Adrenal gland (tissue), 19 donors: ENCODE measurements at regions of chr15 and their contacts with region 1.

Region 1: GRCh38 chr15:72796515-72797337 is 13.2 kb upstream of the ADPGK start:
- DNase-seq: peak in 6 of 7 donors; percentile 16 to 67 (median 52)
- H3K4me3 ChIP-seq: peak overlapping the region in 2 of 4 donors; percentile 31 to 70
- H3K27ac ChIP-seq: no peak overlapping the region
- H3K4me1 ChIP-seq: peaks cover 4 to 5% of the 10 kb centered on the region in 2 donors
- H3K27me3 ChIP-seq: no peaks in the 10 kb centered on the region
- CTCF ChIP-seq: peak in 3 of 6 experiments; percentile 57 to 64 (median 64)
- POLR2A ChIP-seq: no peak

Region 2: DNA sequence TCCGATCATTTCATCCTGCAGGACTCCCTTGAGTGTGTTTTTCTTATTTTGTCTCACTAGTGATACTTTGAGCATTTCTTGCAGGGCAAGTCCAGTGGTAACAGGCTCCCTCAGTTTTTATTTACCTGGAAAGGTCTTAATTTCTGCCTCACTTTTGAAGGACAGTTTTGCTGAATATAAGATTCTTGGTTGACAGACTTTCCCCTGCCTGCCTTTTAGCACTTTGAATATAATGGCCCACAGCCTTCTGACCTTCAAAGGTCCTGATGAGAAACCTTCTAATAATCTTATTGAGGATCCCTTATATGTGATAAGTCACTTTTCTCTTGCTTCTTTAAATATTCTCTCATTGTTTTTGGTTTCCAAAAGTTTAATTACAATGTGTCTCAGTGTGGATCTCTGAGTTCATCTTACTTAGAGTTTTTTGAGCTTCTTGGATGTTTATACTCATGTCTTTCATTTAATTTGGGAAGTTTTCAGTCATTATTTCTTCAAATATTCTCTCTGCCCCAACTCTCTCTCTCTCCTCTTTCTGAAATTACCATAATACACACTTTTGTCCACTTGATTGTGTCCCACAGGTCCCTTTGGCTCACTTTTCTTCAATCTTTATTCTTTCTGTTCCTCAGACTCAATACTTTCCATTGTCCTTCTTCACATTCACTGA is 358.9 kb before region 1 on chr15:
- intact Hi-C with region 1: no loop called
- DNase-seq: no peak
- H3K4me3 ChIP-seq: no peak overlapping the region
- H3K27ac ChIP-seq: no peak overlapping the region
- H3K4me1 ChIP-seq: no peaks in the 10 kb centered on the region
- H3K27me3 ChIP-seq: no peaks in the 10 kb centered on the region
- CTCF ChIP-seq: no peak
- POLR2A ChIP-seq: no peak

Region 3: GRCh38 chr15:72902245-72902918 is 105.7 kb after region 1 on chr15:
- intact Hi-C with region 1: no loop called
- DNase-seq: peak in 5 of 7 donors; percentile 23 to 67 (median 44)
- H3K4me3 ChIP-seq: no peak overlapping the region
- H3K27ac ChIP-seq: peak overlapping the region in 1 of 5 donors; percentile 52
- H3K4me1 ChIP-seq: no peaks in the 10 kb centered on the region
- H3K27me3 ChIP-seq: no peaks in the 10 kb centered on the region
- CTCF ChIP-seq: no peak
- POLR2A ChIP-seq: no peak

Region 4: DNA sequence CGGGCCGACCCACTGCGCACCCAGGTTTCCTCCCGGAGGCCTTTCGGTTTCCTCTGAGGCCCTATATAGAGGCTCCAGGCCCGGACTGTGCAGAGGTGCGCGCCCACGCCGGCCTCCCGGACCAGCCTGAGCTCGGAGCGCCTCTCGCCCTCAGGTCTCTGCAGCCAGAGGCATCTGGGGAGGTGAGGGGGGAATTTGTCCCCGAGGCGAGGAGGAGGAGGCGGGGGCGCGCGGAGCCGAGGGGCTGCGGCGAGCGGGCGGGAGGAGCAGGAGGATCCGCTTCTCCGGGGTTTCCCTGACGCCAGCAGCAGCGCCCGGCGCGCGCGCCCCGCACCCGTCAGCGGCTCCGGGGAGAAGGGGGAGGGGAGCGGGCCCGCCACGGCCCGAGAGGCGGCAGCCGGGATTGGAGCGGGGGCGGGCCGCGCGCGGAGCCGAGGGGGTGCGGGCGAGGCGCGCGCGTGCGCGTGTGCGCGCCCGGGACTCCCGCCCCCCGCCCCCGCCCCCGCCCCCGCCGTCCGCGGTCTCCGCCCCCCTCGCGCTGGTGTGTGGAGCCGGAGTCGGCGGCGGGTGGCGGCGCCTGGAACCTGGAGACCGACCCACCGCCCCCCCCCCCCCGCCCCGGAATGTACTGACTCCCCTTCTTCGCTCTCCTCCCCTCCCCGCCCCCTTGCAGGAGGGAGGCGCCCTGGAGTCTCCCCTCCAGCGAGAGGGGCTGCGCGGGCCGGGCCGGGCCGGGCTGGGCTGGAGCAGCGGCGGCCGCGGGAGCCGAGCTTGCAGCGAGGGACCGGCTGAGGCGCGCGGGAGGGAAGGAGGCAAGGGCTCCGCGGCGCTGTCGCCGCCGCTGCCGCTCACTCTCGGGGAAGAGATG is 255.3 kb after region 1 on chr15 and contains the start of gene NEO1:
- intact Hi-C with region 1: loop called in 1 of 2 experiments (anchors 10 kb)
- DNase-seq: peak; percentile 85 to 92 (median 90)
- H3K4me3 ChIP-seq: peak within 1 kb of the TSS; percentile 45 to 96 (median 92)
- H3K27ac ChIP-seq: peak within 1 kb of the TSS; percentile 66 to 95 (median 91)
- H3K4me1 ChIP-seq: peaks cover 0 to 19% of the 10 kb centered on the region in 2 donors
- H3K27me3 ChIP-seq: no peaks in the 10 kb centered on the region
- CTCF ChIP-seq: no peak
- POLR2A ChIP-seq: peak; percentile 65 to 68
- total RNA-seq, gene NEO1: 7.7 to 28.6 (median 20.2) TPM

Region 5: DNA sequence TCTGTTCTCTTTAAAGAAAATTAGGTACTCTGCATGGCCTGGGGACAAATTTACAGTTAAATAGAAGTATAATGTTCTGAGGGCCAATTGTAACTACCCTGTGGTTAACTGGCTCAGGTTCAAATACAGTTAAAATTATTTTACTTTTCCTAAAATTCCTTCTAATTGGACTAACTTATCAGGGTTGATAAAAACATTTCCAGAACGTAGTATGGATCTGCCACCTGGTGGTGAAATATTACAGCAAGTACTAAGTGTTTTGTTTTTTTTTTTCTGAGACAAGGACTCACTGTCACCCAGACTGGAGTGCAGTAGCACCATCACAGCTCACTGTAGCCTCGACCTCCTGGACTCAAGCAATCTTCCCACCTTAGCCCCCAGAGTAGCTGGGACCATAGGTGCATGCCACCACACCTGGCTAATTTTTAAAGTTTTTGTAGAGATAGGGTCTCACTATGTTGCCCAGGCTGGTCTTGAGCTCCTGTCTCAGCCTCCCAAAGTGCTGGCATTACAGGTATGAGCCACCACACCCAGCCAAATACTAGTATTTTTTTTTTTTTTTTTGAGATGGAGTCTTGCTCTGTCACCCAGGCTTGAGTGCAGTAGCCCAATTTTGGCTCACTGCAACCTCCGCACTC is 284.7 kb after region 1 on chr15:
- intact Hi-C with region 1: loop called in 1 of 2 experiments (anchors 5 kb)
- DNase-seq: peak in 5 of 7 donors; percentile 15 to 48 (median 30)
- H3K4me3 ChIP-seq: no peak overlapping the region
- H3K27ac ChIP-seq: no peak overlapping the region
- H3K4me1 ChIP-seq: peaks cover 0 to 15% of the 10 kb centered on the region in 2 donors
- H3K27me3 ChIP-seq: no peaks in the 10 kb centered on the region
- CTCF ChIP-seq: peak; percentile 55 to 80 (median 68)
- POLR2A ChIP-seq: no peak

Region 6: DNA sequence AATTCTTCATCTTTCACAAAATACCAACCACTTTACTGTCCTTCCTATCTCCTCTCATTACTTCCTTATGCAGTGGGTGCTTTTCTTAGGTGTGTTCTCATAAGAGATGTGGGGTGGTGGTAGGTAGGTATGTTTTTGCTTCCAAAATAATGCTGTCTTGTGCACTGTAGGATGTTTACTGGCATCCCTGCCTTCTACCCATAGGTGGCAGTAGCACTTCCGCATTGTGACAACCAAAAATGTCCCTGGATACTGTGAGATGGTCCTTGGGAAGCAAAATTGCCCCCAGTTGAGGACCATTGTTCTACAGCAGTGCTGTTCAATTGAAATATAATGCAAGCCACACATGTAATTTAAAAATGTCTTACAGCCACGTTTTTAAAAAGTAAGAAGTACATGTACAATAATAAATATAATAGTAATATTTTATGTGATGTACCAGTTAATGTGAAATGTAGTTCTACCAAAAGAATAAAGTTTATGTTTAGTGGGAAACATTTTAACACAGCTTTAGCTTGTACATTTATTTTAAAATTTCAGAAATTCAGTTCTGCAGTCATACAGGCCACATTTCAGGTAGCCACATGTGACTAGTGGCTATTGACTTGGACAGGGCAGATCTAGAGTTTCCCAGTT is 330.7 kb after region 1 on chr15:
- intact Hi-C with region 1: no loop called
- DNase-seq: peak in 6 of 7 donors; percentile 16 to 52 (median 24)
- H3K4me3 ChIP-seq: no peak overlapping the region
- H3K27ac ChIP-seq: no peak overlapping the region
- H3K4me1 ChIP-seq: no peaks in the 10 kb centered on the region
- H3K27me3 ChIP-seq: no peaks in the 10 kb centered on the region
- CTCF ChIP-seq: peak; percentile 24 to 66 (median 54)
- POLR2A ChIP-seq: no peak